ENCODE measurements at regions of chr14 and their contacts with region 1.

Region 1: GRCh38 chr14:32469388-32470160 is 140.5 kb downstream of the AKAP6 start:
- DNase-seq: no peak
- ATAC-seq: peak in 3 of 8 donors; percentile 29 to 56 (median 52)
- H3K4me3 ChIP-seq: no peak overlapping the region
- H3K27ac ChIP-seq: peak overlapping the region in 8 of 10 donors; percentile 2 to 87 (median 66)
- H3K4me1 ChIP-seq: peaks cover 6 to 64% (median 38%) of the 10 kb centered on the region in 9 donors
- H3K27me3 ChIP-seq: no peaks in the 10 kb centered on the region
- CTCF ChIP-seq: peak in 8 of 9 donors; percentile 27 to 71 (median 63)

Region 2: DNA sequence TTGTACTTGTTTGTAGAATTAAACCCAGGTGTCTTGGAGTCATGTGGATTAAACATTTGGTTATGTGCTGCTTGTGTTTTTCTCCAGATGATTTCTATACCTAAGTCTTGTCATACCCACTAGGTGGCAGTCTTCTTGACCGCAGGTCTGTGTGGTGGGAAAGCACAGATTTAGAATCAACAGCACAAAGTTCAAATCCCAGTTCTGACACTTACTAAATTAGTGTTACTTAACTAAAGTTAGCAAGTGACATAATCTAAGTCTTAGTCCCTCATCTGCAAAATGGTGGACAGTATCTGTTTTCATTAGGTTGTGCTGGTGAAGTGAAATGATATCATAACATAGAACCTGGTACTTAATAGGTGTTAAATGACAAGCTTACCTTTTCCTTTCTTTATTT is 543.5 kb before region 1 on chr14:
- intact Hi-C with region 1: loop called in 3 of 10 experiments (anchors 10 kb)
- DNase-seq: no peak
- ATAC-seq: no peak
- H3K4me3 ChIP-seq: no peak overlapping the region
- H3K27ac ChIP-seq: peak overlapping the region; percentile 70 to 92 (median 84)
- H3K4me1 ChIP-seq: peaks cover 5 to 49% (median 36%) of the 10 kb centered on the region in 9 donors
- H3K27me3 ChIP-seq: no peaks in the 10 kb centered on the region
- CTCF ChIP-seq: peak in 8 of 9 donors; percentile 32 to 63 (median 48)

Region 3: DNA sequence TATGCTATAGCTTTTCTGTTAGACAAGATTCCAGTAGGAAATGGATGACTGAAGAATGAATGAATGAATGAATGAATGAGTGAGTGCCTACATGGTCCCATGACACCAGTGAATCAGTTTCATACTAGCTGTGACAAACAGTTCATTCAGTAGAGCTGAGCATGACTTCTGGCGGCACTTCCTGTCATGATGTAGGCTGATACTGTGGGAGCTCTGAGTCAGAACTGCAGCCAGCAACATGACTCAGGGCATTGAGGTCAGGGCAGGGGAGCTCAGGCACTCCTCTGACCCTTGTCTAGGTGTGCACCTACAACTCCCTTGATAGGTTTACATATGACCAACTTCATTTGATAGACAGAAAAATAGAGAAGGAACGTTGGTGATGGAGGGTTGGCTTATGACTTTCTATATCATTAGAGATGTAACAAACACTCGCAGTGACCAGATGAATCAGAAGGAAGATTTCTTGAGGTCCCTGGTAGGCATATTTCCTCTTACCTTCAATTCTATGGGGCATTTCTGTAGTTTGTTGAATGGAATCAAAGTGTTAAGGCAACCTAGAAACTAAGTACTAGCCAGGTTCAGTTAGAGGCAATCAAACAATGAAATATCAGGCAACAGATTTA is 531.7 kb before region 1 on chr14:
- intact Hi-C with region 1: loop called in 3 of 10 experiments (anchors 5 to 10 kb)
- DNase-seq: peak in 1 of 2 donors; percentile 55
- ATAC-seq: peak; percentile 62 to 98 (median 80)
- H3K4me3 ChIP-seq: no peak overlapping the region
- H3K27ac ChIP-seq: peak overlapping the region in 1 of 10 donors; percentile 33
- H3K4me1 ChIP-seq: peaks cover 0 to 37% (median 18%) of the 10 kb centered on the region in 9 donors
- H3K27me3 ChIP-seq: no peaks in the 10 kb centered on the region
- CTCF ChIP-seq: no peak

Region 4: GRCh38 chr14:32354713-32355112 is 114.9 kb before region 1 on chr14:
- intact Hi-C with region 1: no loop called
- DNase-seq: peak; percentile 22 to 23
- ATAC-seq: peak in 4 of 8 donors; percentile 34 to 53 (median 49)
- H3K4me3 ChIP-seq: no peak overlapping the region
- H3K27ac ChIP-seq: no peak overlapping the region
- H3K4me1 ChIP-seq: peaks cover 0 to 8% (median 0%) of the 10 kb centered on the region in 9 donors
- H3K27me3 ChIP-seq: no peaks in the 10 kb centered on the region
- CTCF ChIP-seq: no peak

Region 5: GRCh38 chr14:32509632-32510187 is 40.1 kb after region 1 on chr14:
- intact Hi-C with region 1: loop called in 2 of 10 experiments (anchors 5 kb)
- DNase-seq: peak in 1 of 2 donors; percentile 69
- ATAC-seq: peak; percentile 78 to 94 (median 89)
- H3K4me3 ChIP-seq: peak overlapping the region in 4 of 10 donors; percentile 6 to 33 (median 16)
- H3K27ac ChIP-seq: peak overlapping the region; percentile 62 to 91 (median 80)
- H3K4me1 ChIP-seq: peaks cover 3 to 68% (median 34%) of the 10 kb centered on the region in 9 donors
- H3K27me3 ChIP-seq: no peaks in the 10 kb centered on the region
- CTCF ChIP-seq: no peak

Region 6: DNA sequence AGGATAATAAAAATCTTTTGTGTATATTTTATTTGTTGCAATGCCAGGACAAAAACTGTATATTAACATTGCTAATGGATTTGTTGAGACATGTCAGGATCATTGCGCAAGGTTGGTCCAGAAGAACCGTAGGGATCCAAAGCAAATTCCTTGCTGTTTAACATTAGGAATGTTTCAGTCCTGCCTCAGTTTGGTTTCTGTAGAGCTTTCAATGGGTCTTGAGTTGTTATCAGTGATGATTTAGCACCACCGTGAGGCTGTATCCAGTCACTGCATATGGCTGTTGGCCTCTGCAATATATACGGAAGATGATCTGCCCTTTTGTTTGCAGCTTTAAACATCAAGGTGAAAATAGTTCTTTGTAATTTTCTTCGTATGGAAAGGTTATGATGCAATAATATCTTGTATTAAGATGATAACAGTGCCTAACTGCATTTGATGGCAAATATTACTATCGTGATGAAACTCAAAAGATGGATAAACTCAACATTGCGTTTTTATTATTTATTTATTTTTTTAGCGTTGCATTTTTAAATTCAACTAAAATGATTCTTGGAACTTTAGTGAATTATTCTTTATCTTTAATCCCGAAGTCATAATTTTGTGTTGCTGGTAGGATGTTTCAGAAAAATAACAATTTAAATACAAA is 90.8 kb after region 1 on chr14:
- intact Hi-C with region 1: loop called in 2 of 10 experiments (anchors 5 to 10 kb)
- DNase-seq: peak in 1 of 2 donors; percentile 55
- ATAC-seq: peak; percentile 49 to 86 (median 74)
- H3K4me3 ChIP-seq: no peak overlapping the region
- H3K27ac ChIP-seq: peak overlapping the region in 6 of 10 donors; percentile 5 to 58 (median 47)
- H3K4me1 ChIP-seq: peaks cover 7 to 49% (median 29%) of the 10 kb centered on the region in 9 donors
- H3K27me3 ChIP-seq: no peaks in the 10 kb centered on the region
- CTCF ChIP-seq: peak; percentile 30 to 87 (median 81)